ENCODE measurements at regions of chr2 and their contacts with region 1.

Region 1: DNA sequence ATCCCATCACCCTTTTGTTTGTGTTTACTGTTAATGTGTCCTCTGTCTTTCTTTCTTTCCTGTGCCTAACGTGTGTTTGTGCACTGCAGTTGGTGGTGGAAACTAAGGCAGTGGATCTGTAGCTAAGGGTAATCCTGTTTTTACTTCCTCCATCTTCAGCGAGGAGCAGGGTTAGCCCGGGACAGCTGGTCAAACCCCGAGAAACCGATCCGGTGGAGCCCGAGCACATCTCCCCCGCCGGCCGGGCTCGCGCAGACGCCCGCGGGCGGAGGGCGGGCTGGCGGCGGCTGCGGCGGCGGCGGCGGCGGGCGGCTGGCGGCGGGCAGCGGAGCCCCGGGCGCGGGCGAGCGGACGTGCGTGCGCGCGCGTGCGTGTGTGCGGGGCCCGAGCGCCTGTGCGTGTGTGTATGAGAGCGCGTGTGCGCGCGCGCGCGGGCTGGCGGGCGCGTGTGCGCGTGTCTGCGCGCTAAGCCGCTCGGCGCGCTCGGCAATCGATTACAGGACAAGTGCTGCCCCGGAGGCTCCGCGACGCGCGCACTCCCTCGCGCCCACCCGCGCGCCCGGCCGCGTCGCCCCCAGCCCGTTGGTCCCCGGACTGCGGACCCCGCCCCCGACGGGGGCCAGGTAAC is at the start of gene IKZF2:
- DNase-seq: peak; percentile 80 to 93
- ATAC-seq: peak; percentile 72 to 91 (median 79)
- H3K4me3 ChIP-seq: peak within 1 kb of the TSS; percentile 92
- H3K4me3 Mint-ChIP-seq: peak within 1 kb of the TSS; percentile 98
- H3K27ac ChIP-seq: peak within 1 kb of the TSS; percentile 96
- H3K27ac Mint-ChIP-seq: peak within 1 kb of the TSS; percentile 91 to 93
- H3K4me1 ChIP-seq: no peaks in the 10 kb centered on the region
- H3K4me1 Mint-ChIP-seq: peaks cover 55 to 64% of the 10 kb centered on the region in 2 donors
- H3K27me3 ChIP-seq: no peaks in the 10 kb centered on the region
- H3K27me3 Mint-ChIP-seq: no peaks in the 10 kb centered on the region
- CTCF ChIP-seq: no peak
- total RNA-seq, gene IKZF2: 74.4 to 162 (median 133) TPM

Region 2: DNA sequence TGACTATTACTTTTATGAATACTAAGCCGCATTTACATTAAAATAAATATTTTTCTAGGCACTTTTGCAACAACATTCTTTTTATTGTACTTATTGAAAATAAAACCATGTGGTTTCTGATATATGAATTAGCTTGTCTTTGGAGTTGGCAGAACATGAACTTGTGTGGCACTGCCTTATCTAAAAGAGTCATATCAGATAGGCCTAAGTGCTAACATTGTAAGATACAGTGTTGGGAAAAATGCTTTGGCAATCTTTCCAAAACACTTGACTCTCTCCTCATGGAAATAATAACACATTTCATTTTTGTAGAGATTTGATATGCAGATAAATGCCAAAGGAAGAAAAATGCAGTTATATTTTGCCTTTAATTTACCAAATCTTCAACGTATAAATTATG is 804.7 kb before region 1 on chr2:
- intact Hi-C with region 1: no loop called
- DNase-seq: no peak
- ATAC-seq: no peak
- H3K4me3 ChIP-seq: no peak overlapping the region
- H3K4me3 Mint-ChIP-seq: no peak overlapping the region
- H3K27ac ChIP-seq: no peak overlapping the region
- H3K27ac Mint-ChIP-seq: no peak overlapping the region
- H3K4me1 ChIP-seq: no peaks in the 10 kb centered on the region
- H3K4me1 Mint-ChIP-seq: no peaks in the 10 kb centered on the region
- H3K27me3 ChIP-seq: no peaks in the 10 kb centered on the region
- H3K27me3 Mint-ChIP-seq: no peaks in the 10 kb centered on the region
- CTCF ChIP-seq: no peak

Region 3: GRCh38 chr2:212777020-212777491 is 374.5 kb before region 1 on chr2:
- intact Hi-C with region 1: loop called (anchors 1 kb)
- DNase-seq: peak in 1 of 2 donors; percentile 57
- ATAC-seq: peak; percentile 66 to 91 (median 79)
- H3K4me3 ChIP-seq: no peak overlapping the region
- H3K4me3 Mint-ChIP-seq: peak overlapping the region; percentile 77
- H3K27ac ChIP-seq: no peak overlapping the region
- H3K27ac Mint-ChIP-seq: peak overlapping the region; percentile 46 to 66
- H3K4me1 ChIP-seq: no peaks in the 10 kb centered on the region
- H3K4me1 Mint-ChIP-seq: peaks cover 15 to 23% of the 10 kb centered on the region in 2 donors
- H3K27me3 ChIP-seq: no peaks in the 10 kb centered on the region
- H3K27me3 Mint-ChIP-seq: no peaks in the 10 kb centered on the region
- CTCF ChIP-seq: peak; percentile 86

Region 4: DNA sequence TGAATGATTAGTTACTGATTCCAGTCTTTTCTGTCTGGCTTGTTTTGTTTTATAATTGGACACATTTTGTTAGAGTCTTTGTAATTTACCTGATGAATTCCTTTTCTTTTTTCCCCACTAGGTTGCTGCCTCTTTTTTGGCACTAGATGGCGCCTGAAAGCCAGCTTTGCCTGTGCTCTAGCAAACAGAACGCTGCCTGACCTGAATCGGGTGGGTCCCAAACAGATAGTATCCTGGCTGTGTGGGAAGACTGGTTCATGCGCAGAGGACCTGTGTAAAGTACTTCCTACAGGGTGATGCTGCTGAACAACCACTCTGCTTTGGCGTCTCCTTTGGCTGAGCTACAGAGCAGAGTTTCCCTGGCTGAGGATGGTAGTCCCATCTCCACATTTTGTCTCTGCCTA is 288.4 kb before region 1 on chr2:
- intact Hi-C with region 1: loop called (anchors 1 kb)
- DNase-seq: peak in 1 of 2 donors; percentile 23
- ATAC-seq: peak in 1 of 3 donors; percentile 49
- H3K4me3 ChIP-seq: no peak overlapping the region
- H3K4me3 Mint-ChIP-seq: no peak overlapping the region
- H3K27ac ChIP-seq: no peak overlapping the region
- H3K27ac Mint-ChIP-seq: peak overlapping the region; percentile 37 to 50
- H3K4me1 ChIP-seq: no peaks in the 10 kb centered on the region
- H3K4me1 Mint-ChIP-seq: peaks cover 5 to 6% of the 10 kb centered on the region in 2 donors
- H3K27me3 ChIP-seq: no peaks in the 10 kb centered on the region
- H3K27me3 Mint-ChIP-seq: no peaks in the 10 kb centered on the region
- CTCF ChIP-seq: peak; percentile 34

Region 5: GRCh38 chr2:212974692-212975091 is 176.9 kb before region 1 on chr2:
- intact Hi-C with region 1: loop called (anchors 5 kb)
- DNase-seq: no peak
- ATAC-seq: no peak
- H3K4me3 ChIP-seq: no peak overlapping the region
- H3K4me3 Mint-ChIP-seq: no peak overlapping the region
- H3K27ac ChIP-seq: no peak overlapping the region
- H3K27ac Mint-ChIP-seq: peak overlapping the region in 1 of 2 donors; percentile 61
- H3K4me1 ChIP-seq: no peaks in the 10 kb centered on the region
- H3K4me1 Mint-ChIP-seq: peaks cover 41 to 47% of the 10 kb centered on the region in 2 donors
- H3K27me3 ChIP-seq: no peaks in the 10 kb centered on the region
- H3K27me3 Mint-ChIP-seq: no peaks in the 10 kb centered on the region
- CTCF ChIP-seq: no peak

Region 6: GRCh38 chr2:213015387-213016165 is 136.0 kb before region 1 on chr2:
- intact Hi-C with region 1: loop called (anchors 5 kb)
- DNase-seq: peak in 1 of 2 donors; percentile 49
- ATAC-seq: peak; percentile 70 to 81 (median 74)
- H3K4me3 ChIP-seq: no peak overlapping the region
- H3K4me3 Mint-ChIP-seq: peak overlapping the region; percentile 65
- H3K27ac ChIP-seq: peak overlapping the region; percentile 54
- H3K27ac Mint-ChIP-seq: peak overlapping the region; percentile 22 to 84
- H3K4me1 ChIP-seq: peaks cover 3% of the 10 kb centered on the region
- H3K4me1 Mint-ChIP-seq: peaks cover 39 to 45% of the 10 kb centered on the region in 2 donors
- H3K27me3 ChIP-seq: no peaks in the 10 kb centered on the region
- H3K27me3 Mint-ChIP-seq: no peaks in the 10 kb centered on the region
- CTCF ChIP-seq: no peak

Region 7: DNA sequence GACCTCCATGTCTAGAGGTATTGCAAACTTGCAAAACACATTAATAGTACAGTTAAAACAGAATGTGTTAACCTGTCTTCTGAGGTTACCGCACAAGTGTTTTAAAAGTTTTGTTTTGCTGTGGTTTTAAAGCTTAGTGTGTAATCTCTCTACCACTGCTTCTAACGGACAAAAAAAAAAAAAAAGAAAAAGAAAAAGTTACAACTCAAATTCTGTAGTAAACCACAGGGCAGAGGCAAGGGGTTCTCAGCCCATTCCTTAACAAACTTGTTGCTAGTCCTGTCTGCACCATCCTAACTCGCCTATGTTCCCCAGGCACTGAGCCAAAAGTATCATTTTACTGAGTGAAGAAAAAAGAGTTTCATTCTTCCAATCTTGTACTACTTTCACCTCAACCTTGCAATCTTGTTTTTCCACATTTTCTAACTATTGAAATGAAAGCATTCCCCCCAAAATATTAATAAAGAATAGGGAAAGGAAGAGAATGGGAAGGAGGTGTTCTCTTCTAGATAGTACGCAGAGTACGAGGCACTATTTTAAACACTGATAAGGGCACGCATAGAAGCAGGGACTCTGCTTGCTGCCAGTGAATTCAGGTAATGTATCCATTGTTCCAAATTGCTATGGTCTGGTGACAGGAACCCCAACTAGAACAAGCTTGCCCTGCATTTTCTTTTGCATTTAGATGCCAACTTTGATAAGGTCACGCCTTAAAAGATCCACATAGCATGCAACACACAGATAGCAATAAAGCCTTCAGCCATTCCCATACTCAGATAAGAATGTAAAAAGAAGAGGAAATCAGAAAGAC is 47.3 kb before region 1 on chr2:
- intact Hi-C with region 1: loop called (anchors 2 kb)
- DNase-seq: peak in 1 of 2 donors; percentile 47
- ATAC-seq: peak; percentile 76 to 81 (median 79)
- H3K4me3 ChIP-seq: peak overlapping the region; percentile 11
- H3K4me3 Mint-ChIP-seq: peak overlapping the region; percentile 84
- H3K27ac ChIP-seq: peak overlapping the region; percentile 74
- H3K27ac Mint-ChIP-seq: peak overlapping the region; percentile 74 to 84
- H3K4me1 ChIP-seq: peaks cover 18% of the 10 kb centered on the region
- H3K4me1 Mint-ChIP-seq: peaks cover 62 to 73% of the 10 kb centered on the region in 2 donors
- H3K27me3 ChIP-seq: no peaks in the 10 kb centered on the region
- H3K27me3 Mint-ChIP-seq: no peaks in the 10 kb centered on the region
- CTCF ChIP-seq: no peak

Measured in natural killer cell (primary cell).